ENCODE measurements at regions of chr4 and their contacts with region 1.

Region 1: GRCh38 chr4:86934771-86935565 is at the start of gene AFF1:
- DNase-seq: peak; percentile 94
- H3K4me3 Mint-ChIP-seq: peak within 1 kb of the TSS; percentile 90
- H3K27ac Mint-ChIP-seq: peak within 1 kb of the TSS; percentile 95
- H3K4me1 Mint-ChIP-seq: peaks cover 49% of the 10 kb centered on the region
- H3K27me3 Mint-ChIP-seq: no peaks in the 10 kb centered on the region
- total RNA-seq, gene AFF1: 46.1 to 50.8 TPM

Region 2: GRCh38 chr4:86587381-86588140 is 347.4 kb before region 1 on chr4:
- CTCF ChIA-PET with region 1: no interaction called
- POLR2A ChIA-PET with region 1: no interaction called
- intact Hi-C with region 1: no loop called
- DNase-seq: no peak
- H3K4me3 Mint-ChIP-seq: no peak overlapping the region
- H3K27ac Mint-ChIP-seq: no peak overlapping the region
- H3K4me1 Mint-ChIP-seq: no peaks in the 10 kb centered on the region
- H3K27me3 Mint-ChIP-seq: peaks cover 3% of the 10 kb centered on the region

Region 3: GRCh38 chr4:86891766-86892635 is 43.0 kb before region 1 on chr4 and contains the start of gene C4orf36:
- CTCF ChIA-PET with region 1: no interaction called
- POLR2A ChIA-PET with region 1: no interaction called
- intact Hi-C with region 1: no loop called
- DNase-seq: peak; percentile 56
- H3K4me3 Mint-ChIP-seq: peak within 1 kb of the TSS; percentile 73
- H3K27ac Mint-ChIP-seq: no peak within 1 kb of the TSS
- H3K4me1 Mint-ChIP-seq: no peaks in the 10 kb centered on the region
- H3K27me3 Mint-ChIP-seq: peaks cover 20% of the 10 kb centered on the region
- total RNA-seq, gene C4orf36: 0.61 TPM in 1 of 2 experiments, not detected in the other

Region 4: DNA sequence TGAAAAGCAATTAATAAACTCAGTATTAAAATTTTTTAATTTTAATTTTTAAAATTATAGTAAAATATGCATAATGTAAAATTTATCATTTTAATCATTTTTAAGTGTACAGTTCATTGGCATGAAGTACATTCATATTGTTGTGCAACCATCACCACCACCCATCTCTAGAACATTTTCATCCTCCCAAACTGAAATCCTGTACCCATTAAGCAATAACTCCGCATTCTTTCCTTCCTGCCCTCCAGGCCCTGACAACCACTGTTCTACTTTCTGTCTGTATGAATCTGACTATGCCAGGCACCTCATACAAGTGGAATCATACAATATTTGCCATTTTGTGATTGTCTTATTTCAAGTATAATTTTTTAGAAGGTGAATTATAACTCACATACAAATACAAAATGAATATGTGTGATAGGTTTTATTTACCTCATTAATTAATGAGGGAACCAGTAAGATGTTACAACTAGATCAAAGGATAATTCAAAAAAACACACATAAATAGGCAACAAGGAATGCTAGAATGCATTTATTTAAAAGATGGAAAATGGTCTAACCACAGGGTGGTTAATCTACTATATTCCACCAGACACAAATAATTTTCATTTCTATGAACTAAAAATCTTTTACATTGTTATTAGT is 13.2 kb before region 1 on chr4:
- CTCF ChIA-PET with region 1: interaction called, 44 read pairs
- POLR2A ChIA-PET with region 1: no interaction called
- intact Hi-C with region 1: no loop called
- DNase-seq: no peak
- H3K4me3 Mint-ChIP-seq: no peak overlapping the region
- H3K27ac Mint-ChIP-seq: no peak overlapping the region
- H3K4me1 Mint-ChIP-seq: peaks cover 6% of the 10 kb centered on the region
- H3K27me3 Mint-ChIP-seq: no peaks in the 10 kb centered on the region

Region 5: GRCh38 chr4:87006676-87007527 is 71.9 kb after region 1 on chr4:
- CTCF ChIA-PET with region 1: interaction called, 40 read pairs
- POLR2A ChIA-PET with region 1: interaction called, 103 read pairs
- intact Hi-C with region 1: loop called (anchors 1 kb)
- DNase-seq: peak; percentile 90
- H3K4me3 Mint-ChIP-seq: peak overlapping the region; percentile 91
- H3K27ac Mint-ChIP-seq: peak overlapping the region; percentile 97
- H3K4me1 Mint-ChIP-seq: peaks cover 48% of the 10 kb centered on the region
- H3K27me3 Mint-ChIP-seq: no peaks in the 10 kb centered on the region

Region 6: GRCh38 chr4:87093443-87094123 is 158.6 kb after region 1 on chr4:
- CTCF ChIA-PET with region 1: interaction called, 45 read pairs
- POLR2A ChIA-PET with region 1: interaction called, 3 read pairs
- intact Hi-C with region 1: loop called (anchors 1 kb)
- DNase-seq: peak; percentile 50
- H3K4me3 Mint-ChIP-seq: no peak overlapping the region
- H3K27ac Mint-ChIP-seq: peak overlapping the region; percentile 71
- H3K4me1 Mint-ChIP-seq: peaks cover 50% of the 10 kb centered on the region
- H3K27me3 Mint-ChIP-seq: no peaks in the 10 kb centered on the region

Region 7: GRCh38 chr4:87235020-87235671 is 300.2 kb after region 1 on chr4:
- CTCF ChIA-PET with region 1: interaction called, 5 read pairs
- POLR2A ChIA-PET with region 1: no interaction called
- intact Hi-C with region 1: loop called (anchors 5 kb)
- DNase-seq: no peak
- H3K4me3 Mint-ChIP-seq: peak overlapping the region; percentile 73
- H3K27ac Mint-ChIP-seq: no peak overlapping the region
- H3K4me1 Mint-ChIP-seq: no peaks in the 10 kb centered on the region
- H3K27me3 Mint-ChIP-seq: peaks cover 2% of the 10 kb centered on the region

Region 8: GRCh38 chr4:87758270-87758669 is 823.3 kb after region 1 on chr4:
- CTCF ChIA-PET with region 1: no interaction called
- POLR2A ChIA-PET with region 1: no interaction called
- intact Hi-C with region 1: no loop called
- DNase-seq: no peak
- H3K4me3 Mint-ChIP-seq: no peak overlapping the region
- H3K27ac Mint-ChIP-seq: no peak overlapping the region
- H3K4me1 Mint-ChIP-seq: no peaks in the 10 kb centered on the region
- H3K27me3 Mint-ChIP-seq: peaks cover 2% of the 10 kb centered on the region

Region 9: GRCh38 chr4:88378691-88379559 is 1444.0 kb after region 1 on chr4 and contains the start of gene HERC6:
- CTCF ChIA-PET with region 1: no interaction called
- POLR2A ChIA-PET with region 1: no interaction called
- intact Hi-C with region 1: loop called (anchors 5 kb)
- DNase-seq: peak; percentile 86
- H3K4me3 Mint-ChIP-seq: peak within 1 kb of the TSS; percentile 83
- H3K27ac Mint-ChIP-seq: peak within 1 kb of the TSS; percentile 85
- H3K4me1 Mint-ChIP-seq: peaks cover 49% of the 10 kb centered on the region
- H3K27me3 Mint-ChIP-seq: no peaks in the 10 kb centered on the region
- total RNA-seq, gene HERC6: 12.4 to 12.5 TPM